PC-3 (cell line): ENCODE measurements at regions of chr11 and their contacts with region 1.

Region 1: GRCh38 chr11:122853971-122854446 is 15.7 kb downstream of the CRTAM start:
- DNase-seq: peak; percentile 96
- ATAC-seq: 0 out of 2 replicates have a peak, but pooled peaks have one; percentile 8
- H3K4me3 ChIP-seq: no peak overlapping the region
- H3K27ac ChIP-seq: peak overlapping the region; percentile 96; the same call in 1 of the 2 replicates
- H3K4me1 ChIP-seq: peaks cover 44% of the 10 kb centered on the region
- H3K27me3 ChIP-seq: no peaks in the 10 kb centered on the region
- CTCF ChIP-seq: peak; percentile 92

Region 2: DNA sequence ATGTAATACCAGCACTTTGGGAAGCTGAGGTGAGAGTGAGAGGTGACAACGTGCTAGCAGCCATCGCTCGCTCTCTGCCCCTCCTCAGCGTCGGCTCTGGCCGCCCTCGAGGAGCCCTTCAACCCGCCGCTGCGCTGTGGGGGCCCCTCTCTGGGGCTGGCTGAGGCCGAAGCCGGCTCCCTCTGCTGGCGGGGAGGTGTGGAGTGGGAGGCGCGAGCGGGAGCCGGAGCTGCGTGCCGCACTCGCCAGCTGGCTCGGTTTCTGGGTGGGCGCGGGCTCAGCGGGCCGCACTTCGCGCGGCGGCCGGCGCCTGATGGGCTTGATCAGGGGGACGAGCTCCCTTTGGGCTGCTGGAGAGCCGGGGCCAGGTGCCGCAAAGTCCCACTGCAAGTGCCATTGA is 297.4 kb before region 1 on chr11:
- CTCF ChIA-PET with region 1: interaction called, 11 read pairs
- POLR2A ChIA-PET with region 1: no interaction called
- intact Hi-C with region 1: no loop called
- DNase-seq: no peak
- ATAC-seq: no peak
- H3K4me3 ChIP-seq: no peak overlapping the region
- H3K27ac ChIP-seq: no peak overlapping the region
- H3K4me1 ChIP-seq: no peaks in the 10 kb centered on the region
- H3K27me3 ChIP-seq: peaks cover 26% of the 10 kb centered on the region
- CTCF ChIP-seq: no peak; the same call in 1 of the 2 replicates

Region 3: GRCh38 chr11:122628810-122629555 is 225.0 kb before region 1 on chr11:
- CTCF ChIA-PET with region 1: interaction called, 16 read pairs
- POLR2A ChIA-PET with region 1: no interaction called
- intact Hi-C with region 1: loop called (anchors 1 kb)
- DNase-seq: peak; percentile 94
- ATAC-seq: peak; percentile 96
- H3K4me3 ChIP-seq: no peak overlapping the region
- H3K27ac ChIP-seq: no peak overlapping the region
- H3K4me1 ChIP-seq: peaks cover 14% of the 10 kb centered on the region; the same call in 1 of the 2 replicates
- H3K27me3 ChIP-seq: no peaks in the 10 kb centered on the region
- CTCF ChIP-seq: peak; percentile 98

Region 4: GRCh38 chr11:122781378-122782195 is 72.4 kb before region 1 on chr11:
- CTCF ChIA-PET with region 1: interaction called, 4 read pairs
- POLR2A ChIA-PET with region 1: no interaction called
- intact Hi-C with region 1: loop called (anchors 1 kb)
- DNase-seq: peak; percentile 95
- ATAC-seq: peak; percentile 98
- H3K4me3 ChIP-seq: no peak overlapping the region
- H3K27ac ChIP-seq: no peak overlapping the region
- H3K4me1 ChIP-seq: peaks cover 14% of the 10 kb centered on the region
- H3K27me3 ChIP-seq: no peaks in the 10 kb centered on the region
- CTCF ChIP-seq: peak; percentile 98

Region 5: GRCh38 chr11:122814401-122814800 is 39.6 kb before region 1 on chr11:
- CTCF ChIA-PET with region 1: no interaction called
- POLR2A ChIA-PET with region 1: interaction called, 3 read pairs
- intact Hi-C with region 1: loop called (anchors 1 kb)
- DNase-seq: peak; percentile 48
- ATAC-seq: peak; percentile 42
- H3K4me3 ChIP-seq: no peak overlapping the region
- H3K27ac ChIP-seq: no peak overlapping the region
- H3K4me1 ChIP-seq: peaks cover 20% of the 10 kb centered on the region
- H3K27me3 ChIP-seq: no peaks in the 10 kb centered on the region
- CTCF ChIP-seq: peak; percentile 75

Region 6: DNA sequence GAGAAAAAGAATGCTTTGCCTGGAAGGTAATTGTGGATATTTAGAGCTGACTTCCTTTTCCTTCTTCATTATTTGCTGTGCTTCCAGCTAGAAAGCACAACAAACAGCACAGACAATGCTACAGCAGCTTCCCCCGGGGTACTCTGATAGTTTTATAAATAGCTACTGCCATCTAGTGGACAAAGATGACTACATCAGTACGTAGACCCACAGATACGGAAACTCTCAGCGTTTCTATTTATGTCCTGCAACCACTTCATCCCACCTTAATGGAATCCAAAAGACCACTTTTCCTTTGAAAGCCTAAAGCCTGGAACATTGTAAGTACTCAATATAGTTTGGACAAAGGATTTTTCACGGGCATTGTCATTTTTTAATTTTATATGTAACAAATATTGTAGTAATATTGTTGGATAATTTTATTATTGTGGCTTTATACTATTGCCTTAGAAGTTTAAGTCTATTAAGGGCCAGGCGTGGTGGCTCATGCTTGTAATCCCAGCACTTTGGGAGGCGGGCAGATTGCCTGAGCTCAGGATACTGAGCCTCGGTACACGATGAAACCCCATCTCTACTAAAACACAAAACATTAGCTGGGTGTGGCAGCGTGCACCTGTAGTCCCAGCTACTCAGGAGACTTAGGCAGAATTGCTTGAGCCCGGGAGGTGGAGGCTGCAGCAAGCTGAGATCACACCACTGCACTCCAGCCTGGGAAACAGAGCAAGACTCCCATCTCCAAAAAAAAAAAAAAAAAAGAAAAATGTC is 200.5 kb after region 1 on chr11:
- CTCF ChIA-PET with region 1: interaction called, 12 read pairs
- POLR2A ChIA-PET with region 1: no interaction called
- intact Hi-C with region 1: no loop called
- DNase-seq: peak; percentile 89
- ATAC-seq: peak; percentile 82
- H3K4me3 ChIP-seq: no peak overlapping the region
- H3K27ac ChIP-seq: no peak overlapping the region
- H3K4me1 ChIP-seq: peaks cover 24% of the 10 kb centered on the region
- H3K27me3 ChIP-seq: no peaks in the 10 kb centered on the region
- CTCF ChIP-seq: peak; percentile 87